Stomach (tissue), 19 donors: ENCODE measurements at regions of chr3 and their contacts with region 1.

Region 1: GRCh38 chr3:14467814-14468620 is 65.6 kb downstream of the SLC6A6 start:
- DNase-seq: peak; percentile 35 to 78
- H3K4me3 ChIP-seq: no peak overlapping the region
- H3K27ac ChIP-seq: no peak overlapping the region
- H3K4me1 ChIP-seq: peaks cover 0 to 8% (median under 1%) of the 10 kb centered on the region in 4 donors
- H3K27me3 ChIP-seq: no peaks in the 10 kb centered on the region
- CTCF ChIP-seq: peak in 5 of 7 experiments; percentile 62 to 90 (median 81)
- EP300 ChIP-seq: no peak
- POLR2A ChIP-seq: no peak

Region 2: GRCh38 chr3:14261229-14261628 is 206.8 kb before region 1 on chr3:
- intact Hi-C with region 1: loop called (anchors 5 kb)
- DNase-seq: peak; percentile 90 to 93
- H3K4me3 ChIP-seq: no peak overlapping the region
- H3K27ac ChIP-seq: no peak overlapping the region
- H3K4me1 ChIP-seq: peaks cover 0 to 21% (median 13%) of the 10 kb centered on the region in 4 donors
- H3K27me3 ChIP-seq: peaks cover 0 to 3% (median 0%) of the 10 kb centered on the region in 3 donors
- CTCF ChIP-seq: peak in 6 of 7 experiments; percentile 88 to 98 (median 93)
- EP300 ChIP-seq: no peak
- POLR2A ChIP-seq: no peak

Region 3: GRCh38 chr3:14598143-14598569 is 130.1 kb after region 1 on chr3:
- intact Hi-C with region 1: no loop called
- DNase-seq: peak in 1 of 2 donors; percentile 78
- H3K4me3 ChIP-seq: no peak overlapping the region
- H3K27ac ChIP-seq: no peak overlapping the region
- H3K4me1 ChIP-seq: peaks cover 7 to 13% (median 10%) of the 10 kb centered on the region in 4 donors
- H3K27me3 ChIP-seq: peaks cover 0 to 89% (median 16%) of the 10 kb centered on the region in 3 donors
- CTCF ChIP-seq: no peak
- EP300 ChIP-seq: no peak
- POLR2A ChIP-seq: no peak